ENCODE measurements at regions of chr7 and their contacts with region 1.

Region 1: GRCh38 chr7:143408686-143409561 is at the start of gene EPHA1:
- DNase-seq: peak; percentile 48 to 91 (median 75)
- ATAC-seq: peak; percentile 44
- H3K4me3 ChIP-seq: no peak within 1 kb of the TSS
- H3K27ac ChIP-seq: no peak within 1 kb of the TSS
- H3K4me1 ChIP-seq: peaks cover 2 to 7% of the 10 kb centered on the region in 2 experiments; a peak in 4 of 5 replicates
- H3K27me3 ChIP-seq: peaks cover 39 to 49% of the 10 kb centered on the region in 2 experiments; a peak in 4 of 5 replicates
- CTCF ChIP-seq: peak; percentile 37 to 50 (median 48); a peak in 5 of 6 replicates
- EP300 ChIP-seq: no peak
- POLR2A ChIP-seq: no peak
- RAD21 ChIP-seq: 0 out of 4 replicates have a peak, but pooled peaks of 1 of the 2 experiments have one; percentile 14
- polyA plus RNA-seq, gene EPHA1: not detected

Region 2: GRCh38 chr7:143205560-143206293 is 203.2 kb before region 1 on chr7:
- CTCF ChIA-PET with region 1: no interaction called
- POLR2A ChIA-PET with region 1: no interaction called
- in situ Hi-C with region 1: no loop called
- intact Hi-C with region 1: no loop called
- DNase-seq: no peak
- ATAC-seq: no peak
- H3K4me3 ChIP-seq: no peak overlapping the region
- H3K27ac ChIP-seq: no peak overlapping the region
- H3K4me1 ChIP-seq: no peaks in the 10 kb centered on the region
- H3K27me3 ChIP-seq: peaks cover 7 to 23% of the 10 kb centered on the region in 2 experiments; a peak in 3 of 5 replicates
- CTCF ChIP-seq: no peak
- EP300 ChIP-seq: no peak
- POLR2A ChIP-seq: no peak
- RAD21 ChIP-seq: no peak

Region 3: GRCh38 chr7:143345428-143345900 is 63.5 kb before region 1 on chr7:
- CTCF ChIA-PET with region 1: interaction called, 10 read pairs
- POLR2A ChIA-PET with region 1: interaction called, 4 read pairs
- in situ Hi-C with region 1: no loop called
- intact Hi-C with region 1: no loop called
- DNase-seq: peak; percentile 63 to 90 (median 76)
- ATAC-seq: peak; percentile 100
- H3K4me3 ChIP-seq: peak overlapping the region; percentile 1; the same call in 1 of the 2 replicates
- H3K27ac ChIP-seq: no peak overlapping the region
- H3K4me1 ChIP-seq: peaks cover 0 to 7% of the 10 kb centered on the region in 2 experiments; a peak in 2 of 5 replicates
- H3K27me3 ChIP-seq: peaks cover 33 to 53% of the 10 kb centered on the region in 2 experiments
- CTCF ChIP-seq: peak; percentile 81 to 96 (median 85)
- EP300 ChIP-seq: no peak
- POLR2A ChIP-seq: no peak
- RAD21 ChIP-seq: peak in 1 of 2 experiments; percentile 53; a peak in 2 of 4 replicates

Region 4: DNA sequence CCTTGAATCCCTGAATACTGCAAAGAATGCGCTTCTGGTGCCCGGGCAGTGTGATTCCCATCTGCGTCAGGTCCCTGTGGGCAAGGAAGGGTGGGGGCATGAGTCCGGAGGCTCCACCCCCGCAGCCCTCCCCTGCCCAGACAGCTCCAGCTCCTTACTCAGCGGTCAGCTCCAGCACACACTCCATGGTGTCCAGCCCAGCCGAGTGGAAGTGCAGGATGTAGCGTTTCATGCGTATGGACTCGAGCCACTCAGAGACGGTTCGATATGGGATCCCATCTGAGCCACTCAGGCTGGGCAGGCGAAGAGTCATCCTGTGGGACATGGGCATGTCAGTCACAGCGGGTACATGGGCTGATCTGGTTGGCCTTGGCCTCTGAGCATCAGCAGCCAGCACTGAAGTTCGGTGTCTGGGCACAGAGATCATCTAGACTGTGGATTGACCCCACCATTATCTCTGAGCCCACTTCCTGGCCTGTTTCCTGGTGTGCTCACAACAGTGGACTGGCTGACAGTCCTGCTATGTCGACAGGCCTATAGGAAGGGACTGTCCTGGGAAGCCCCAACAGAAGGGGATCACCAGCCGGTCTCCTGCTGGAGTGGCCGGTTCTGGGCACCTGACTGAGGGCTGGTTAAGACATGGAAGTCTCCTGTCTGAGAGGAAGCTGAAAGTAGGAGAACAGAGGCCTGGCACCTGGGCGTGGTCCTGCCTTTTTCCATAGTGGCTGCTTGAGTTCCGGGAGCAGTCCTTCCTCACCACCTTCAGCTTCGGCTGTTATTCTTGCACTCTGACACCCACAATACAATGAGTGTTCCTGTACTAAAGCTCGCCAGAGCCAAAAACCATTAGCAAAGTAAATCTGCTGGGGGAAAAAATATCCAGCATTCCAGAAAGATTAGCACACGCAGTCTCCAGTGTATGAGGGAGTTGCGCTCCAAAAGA is 17.2 kb before region 1 on chr7:
- CTCF ChIA-PET with region 1: no interaction called
- POLR2A ChIA-PET with region 1: interaction called, 131 read pairs
- in situ Hi-C with region 1: no loop called
- intact Hi-C with region 1: no loop called
- DNase-seq: peak in 1 of 4 experiments; percentile 20
- ATAC-seq: peak; percentile 2; the same call in 1 of the 3 replicates
- H3K4me3 ChIP-seq: no peak overlapping the region
- H3K27ac ChIP-seq: no peak overlapping the region
- H3K4me1 ChIP-seq: peaks cover 0 to 22% of the 10 kb centered on the region in 2 experiments; a peak in 2 of 5 replicates
- H3K27me3 ChIP-seq: peaks cover 8 to 34% of the 10 kb centered on the region in 2 experiments; a peak in 4 of 5 replicates
- CTCF ChIP-seq: no peak
- EP300 ChIP-seq: no peak
- POLR2A ChIP-seq: 0 out of 2 replicates have a peak, but pooled peaks have one; percentile 30
- RAD21 ChIP-seq: no peak

Region 5: GRCh38 chr7:143733876-143734275 is 325.0 kb after region 1 on chr7:
- CTCF ChIA-PET with region 1: no interaction called
- POLR2A ChIA-PET with region 1: no interaction called
- in situ Hi-C with region 1: no loop called
- intact Hi-C with region 1: no loop called
- DNase-seq: peak in 1 of 4 experiments; percentile 5
- ATAC-seq: no peak
- H3K4me3 ChIP-seq: no peak overlapping the region
- H3K27ac ChIP-seq: no peak overlapping the region
- H3K4me1 ChIP-seq: 0 out of 5 replicates have a peak, but pooled peaks cover 0 to 2% of the 10 kb centered on the region in 2 experiments
- H3K27me3 ChIP-seq: no peaks in the 10 kb centered on the region
- CTCF ChIP-seq: no peak
- EP300 ChIP-seq: no peak
- POLR2A ChIP-seq: no peak
- RAD21 ChIP-seq: no peak

Measured in K562 (cell line).